ENCODE measurements at regions of chr12 and their contacts with region 1.

Region 1: GRCh38 chr12:1644534-1645438 is 15.8 kb downstream of the WNT5B start:
- DNase-seq: peak; percentile 81 to 88 (median 83)
- ATAC-seq: peak; percentile 33 to 80 (median 58)
- H3K4me3 ChIP-seq: no peak overlapping the region
- H3K27ac ChIP-seq: peak overlapping the region in 3 of 12 donors; percentile 30 to 49 (median 48)
- H3K4me1 ChIP-seq: peaks cover 0 to 32% (median 14%) of the 10 kb centered on the region in 12 donors
- H3K27me3 ChIP-seq: no peaks in the 10 kb centered on the region
- CTCF ChIP-seq: no peak
- POLR2A ChIP-seq: no peak

Region 2: GRCh38 chr12:1488908-1489381 is 155.8 kb before region 1 on chr12:
- intact Hi-C with region 1: no loop called
- DNase-seq: no peak
- ATAC-seq: peak in 1 of 4 donors; percentile 33
- H3K4me3 ChIP-seq: no peak overlapping the region
- H3K27ac ChIP-seq: no peak overlapping the region
- H3K4me1 ChIP-seq: peaks cover 0 to 10% (median 0%) of the 10 kb centered on the region in 12 donors
- H3K27me3 ChIP-seq: no peaks in the 10 kb centered on the region
- CTCF ChIP-seq: no peak
- POLR2A ChIP-seq: no peak

Region 3: DNA sequence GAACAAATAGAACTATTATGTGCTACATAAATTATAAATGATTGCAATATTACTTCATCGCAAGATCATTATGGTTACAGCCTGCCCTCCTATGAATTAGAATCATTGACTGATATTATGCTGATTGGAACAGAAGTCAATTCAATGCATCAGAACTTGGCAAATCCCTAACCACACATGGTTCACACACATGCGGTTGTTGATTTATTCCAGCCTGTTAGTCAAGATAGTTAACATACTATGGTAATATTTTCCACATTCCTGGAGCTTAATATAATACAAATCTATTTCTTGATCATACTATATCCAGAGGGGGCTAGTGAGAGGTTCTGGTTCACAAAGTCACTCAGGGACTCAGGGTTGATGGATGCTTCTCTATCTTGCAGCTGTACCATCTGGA is 398.3 kb after region 1 on chr12:
- intact Hi-C with region 1: loop called in 1 of 10 experiments (anchors 5 kb)
- DNase-seq: no peak
- ATAC-seq: no peak
- H3K4me3 ChIP-seq: no peak overlapping the region
- H3K27ac ChIP-seq: no peak overlapping the region
- H3K4me1 ChIP-seq: peaks cover 0 to 34% (median 5%) of the 10 kb centered on the region in 12 donors
- H3K27me3 ChIP-seq: peaks cover 0 to under 1% (median 0%) of the 10 kb centered on the region in 9 donors
- CTCF ChIP-seq: no peak
- POLR2A ChIP-seq: no peak